ENCODE measurements at regions of chr1 and their contacts with region 1.

Region 1: DNA sequence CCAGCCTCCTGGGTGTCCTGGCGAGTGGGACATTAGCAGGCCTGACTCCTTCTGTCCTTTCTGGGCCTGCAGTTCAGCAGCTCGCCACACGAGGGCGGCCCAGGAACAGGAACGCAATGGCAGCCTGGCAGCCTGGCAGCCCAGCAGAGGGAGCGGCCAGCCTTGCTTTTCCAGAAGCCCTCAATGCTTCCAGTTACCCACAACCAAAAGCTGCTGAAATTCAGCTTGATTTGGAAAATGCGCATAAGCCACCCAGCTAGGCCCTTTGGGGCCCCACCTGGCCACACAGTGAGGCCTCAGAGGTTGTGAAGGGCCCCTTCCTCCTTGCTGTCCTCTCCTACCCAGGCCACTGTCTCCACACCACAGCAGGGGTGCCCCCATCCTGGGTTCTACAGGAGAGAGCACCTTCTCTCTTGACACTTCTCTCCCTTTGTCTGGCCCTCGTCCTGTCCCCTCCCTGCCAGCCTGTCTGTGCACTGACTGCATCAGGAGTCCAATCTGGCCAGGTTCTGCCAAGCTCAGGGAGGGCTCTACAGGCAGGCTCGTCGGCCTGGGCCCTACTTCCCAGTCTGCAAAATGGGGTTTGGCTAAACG is 103.4 kb upstream of the VAMP3 start:
- DNase-seq: peak; percentile 91
- ATAC-seq: peak; percentile 86
- H3K4me3 Mint-ChIP-seq: no peak overlapping the region
- H3K27ac Mint-ChIP-seq: peak overlapping the region; percentile 64
- H3K4me1 Mint-ChIP-seq: peaks cover 4% of the 10 kb centered on the region
- H3K27me3 Mint-ChIP-seq: peaks cover 5% of the 10 kb centered on the region
- CTCF ChIP-seq: peak; percentile 98

Region 2: GRCh38 chr1:7454895-7455784 is 212.6 kb before region 1 on chr1:
- CTCF ChIA-PET with region 1: no interaction called
- POLR2A ChIA-PET with region 1: no interaction called
- intact Hi-C with region 1: no loop called
- DNase-seq: no peak
- ATAC-seq: no peak
- H3K4me3 Mint-ChIP-seq: no peak overlapping the region
- H3K27ac Mint-ChIP-seq: no peak overlapping the region
- H3K4me1 Mint-ChIP-seq: no peaks in the 10 kb centered on the region
- H3K27me3 Mint-ChIP-seq: no peaks in the 10 kb centered on the region
- CTCF ChIP-seq: no peak

Region 3: GRCh38 chr1:7680207-7680954 is 12.7 kb after region 1 on chr1:
- CTCF ChIA-PET with region 1: interaction called, 118 read pairs
- POLR2A ChIA-PET with region 1: interaction called, 4 read pairs
- intact Hi-C with region 1: no loop called
- DNase-seq: peak; percentile 27
- ATAC-seq: peak; percentile 54
- H3K4me3 Mint-ChIP-seq: peak overlapping the region; percentile 60
- H3K27ac Mint-ChIP-seq: no peak overlapping the region
- H3K4me1 Mint-ChIP-seq: no peaks in the 10 kb centered on the region
- H3K27me3 Mint-ChIP-seq: peaks cover 3% of the 10 kb centered on the region
- CTCF ChIP-seq: no peak

Region 4: GRCh38 chr1:7710859-7711258 is 43.1 kb after region 1 on chr1:
- CTCF ChIA-PET with region 1: interaction called, 22 read pairs
- POLR2A ChIA-PET with region 1: no interaction called
- intact Hi-C with region 1: no loop called
- DNase-seq: no peak
- ATAC-seq: no peak
- H3K4me3 Mint-ChIP-seq: no peak overlapping the region
- H3K27ac Mint-ChIP-seq: no peak overlapping the region
- H3K4me1 Mint-ChIP-seq: peaks cover 4% of the 10 kb centered on the region
- H3K27me3 Mint-ChIP-seq: peaks cover 35% of the 10 kb centered on the region
- CTCF ChIP-seq: no peak

Region 5: DNA sequence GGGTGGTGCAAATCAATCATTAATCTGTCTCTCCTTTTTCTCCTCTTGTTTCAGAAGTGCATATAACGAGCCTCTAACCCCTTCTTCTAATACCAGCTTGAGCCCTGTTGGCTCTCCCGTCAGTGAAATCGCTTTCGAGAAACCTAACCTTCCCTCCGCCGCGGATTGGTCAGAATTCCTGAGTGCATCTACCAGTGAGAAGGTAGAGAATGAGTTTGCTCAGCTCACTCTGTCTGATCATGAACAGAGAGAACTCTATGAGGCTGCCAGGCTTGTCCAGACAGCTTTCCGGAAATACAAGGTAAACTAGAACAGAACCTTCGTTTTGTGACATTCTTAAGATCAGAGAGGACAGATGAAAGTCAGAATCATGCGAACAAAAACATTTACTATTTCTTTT is 78.1 kb after region 1 on chr1:
- CTCF ChIA-PET with region 1: interaction called, 589 read pairs
- POLR2A ChIA-PET with region 1: no interaction called
- intact Hi-C with region 1: no loop called
- DNase-seq: no peak
- ATAC-seq: no peak
- H3K4me3 Mint-ChIP-seq: no peak overlapping the region
- H3K27ac Mint-ChIP-seq: no peak overlapping the region
- H3K4me1 Mint-ChIP-seq: no peaks in the 10 kb centered on the region
- H3K27me3 Mint-ChIP-seq: no peaks in the 10 kb centered on the region
- CTCF ChIP-seq: no peak

Region 6: DNA sequence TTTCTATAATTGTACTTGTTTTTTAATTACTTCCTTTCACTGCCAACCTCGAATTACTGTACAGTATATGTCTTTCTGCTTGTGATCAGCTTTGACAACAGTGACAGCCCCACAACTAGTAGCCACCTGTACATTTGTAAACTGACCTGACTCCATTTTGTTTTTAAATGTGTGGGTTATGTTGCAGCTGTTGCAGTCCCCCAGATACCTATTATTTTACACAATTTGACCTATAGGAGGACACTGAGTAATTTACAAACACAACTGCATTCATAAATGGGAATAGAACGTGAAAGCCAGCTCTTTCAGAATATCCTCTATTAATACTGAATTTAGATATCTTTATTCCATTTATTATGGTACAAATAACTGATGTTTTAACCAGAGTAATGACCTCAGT is 100.9 kb after region 1 on chr1:
- CTCF ChIA-PET with region 1: interaction called, 57 read pairs
- POLR2A ChIA-PET with region 1: no interaction called
- intact Hi-C with region 1: no loop called
- DNase-seq: no peak
- ATAC-seq: no peak
- H3K4me3 Mint-ChIP-seq: no peak overlapping the region
- H3K27ac Mint-ChIP-seq: no peak overlapping the region
- H3K4me1 Mint-ChIP-seq: peaks cover 20% of the 10 kb centered on the region
- H3K27me3 Mint-ChIP-seq: peaks cover 10% of the 10 kb centered on the region
- CTCF ChIP-seq: no peak